ENCODE measurements at regions of chr18 and their contacts with region 1.

Region 1: DNA sequence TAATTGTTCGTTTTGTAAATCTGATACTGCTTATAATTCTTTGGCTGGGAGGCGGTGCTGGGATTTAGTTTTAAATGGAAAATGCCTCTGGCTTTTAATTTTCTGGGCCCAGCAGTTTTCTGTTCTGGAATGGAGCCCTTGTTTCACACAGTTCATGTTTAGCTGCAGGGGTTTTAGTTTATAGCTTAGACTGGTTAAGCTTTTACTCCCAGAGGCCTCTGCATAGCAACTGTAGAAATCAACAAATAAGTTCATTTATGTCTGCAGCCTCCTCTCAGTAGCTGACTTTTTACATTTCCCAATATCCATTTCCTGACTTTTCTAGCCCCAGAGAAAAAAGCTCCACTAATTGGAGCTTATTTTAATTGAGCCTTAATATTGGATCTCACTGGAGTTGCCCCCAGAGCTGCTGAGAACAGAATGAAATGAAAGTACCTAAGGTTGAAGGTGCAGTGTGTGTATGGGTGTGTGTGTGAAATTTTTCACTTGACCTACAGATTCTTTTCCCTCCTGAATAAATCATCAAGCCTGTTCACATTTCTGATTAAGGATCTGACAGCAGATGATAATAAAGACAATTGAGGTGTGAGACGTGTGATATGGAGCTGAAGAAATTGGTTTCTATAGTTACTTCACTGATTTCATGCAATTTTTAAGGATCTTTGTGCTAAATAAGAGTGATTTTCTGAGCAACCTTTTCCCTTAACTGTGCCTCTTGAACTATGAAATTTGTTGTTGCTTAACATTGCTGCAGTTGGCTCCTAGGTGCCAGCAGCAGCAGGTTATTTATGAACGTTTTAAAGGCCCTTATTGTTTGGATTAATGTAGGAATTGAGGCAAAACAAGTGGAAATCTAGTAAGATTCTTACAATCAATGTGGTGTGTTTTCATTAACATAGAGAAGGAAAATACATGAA is 109.6 kb downstream of the TAF4B start:
- DNase-seq: no peak
- ATAC-seq: no peak
- H3K4me3 ChIP-seq: no peak overlapping the region
- H3K4me3 Mint-ChIP-seq: no peak overlapping the region
- H3K27ac ChIP-seq: no peak overlapping the region
- H3K27ac Mint-ChIP-seq: no peak overlapping the region
- H3K4me1 ChIP-seq: no peaks in the 10 kb centered on the region
- H3K4me1 Mint-ChIP-seq: no peaks in the 10 kb centered on the region
- H3K27me3 ChIP-seq: no peaks in the 10 kb centered on the region
- H3K27me3 Mint-ChIP-seq: no peaks in the 10 kb centered on the region
- CTCF ChIP-seq: no peak

Region 2: DNA sequence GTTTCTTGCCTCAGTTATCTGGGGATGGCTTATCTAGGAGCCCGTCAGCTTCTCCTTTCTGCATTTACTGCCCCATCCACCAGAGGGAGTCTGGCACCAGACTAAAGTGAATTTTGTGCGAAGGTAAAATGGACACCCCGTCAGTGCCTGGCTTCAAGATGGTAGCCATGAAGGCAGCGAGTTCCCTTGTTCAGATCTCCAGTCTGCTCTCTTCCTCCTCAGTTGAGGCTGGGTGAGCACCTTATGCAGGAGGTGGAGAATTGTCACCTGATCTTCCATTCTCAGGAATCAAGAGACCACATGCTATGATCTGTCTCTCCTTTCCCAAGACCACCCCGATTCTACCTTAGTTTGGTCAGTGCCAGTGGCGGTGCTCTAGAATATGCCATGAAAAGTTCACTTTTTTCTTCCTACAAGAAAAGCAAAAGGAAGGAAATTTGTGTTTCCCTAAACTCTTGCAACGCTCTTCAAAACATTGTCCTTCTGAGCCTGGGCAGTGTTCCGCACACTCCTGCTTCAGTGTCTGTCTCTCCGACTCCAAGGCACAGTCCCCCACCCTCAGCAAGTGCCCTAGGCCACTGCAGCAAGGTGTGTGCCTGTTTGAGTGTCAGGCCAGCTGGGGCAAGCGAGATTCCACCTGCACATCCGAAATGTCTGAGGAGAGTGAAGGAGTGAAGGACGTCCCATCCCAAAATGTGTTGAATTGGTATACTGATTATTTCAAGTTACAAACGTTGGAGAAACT is 414.0 kb before region 1 on chr18:
- CTCF ChIA-PET with region 1: interaction called, 4 read pairs
- POLR2A ChIA-PET with region 1: no interaction called
- intact Hi-C with region 1: loop called (anchors 1 kb)
- DNase-seq: peak; percentile 49
- ATAC-seq: peak; percentile 36
- H3K4me3 ChIP-seq: no peak overlapping the region
- H3K4me3 Mint-ChIP-seq: no peak overlapping the region
- H3K27ac ChIP-seq: no peak overlapping the region
- H3K27ac Mint-ChIP-seq: no peak overlapping the region
- H3K4me1 ChIP-seq: peaks cover 0 to 3% of the 10 kb centered on the region in 2 donors
- H3K4me1 Mint-ChIP-seq: no peaks in the 10 kb centered on the region
- H3K27me3 ChIP-seq: peaks cover 0 to 3% (median 0%) of the 10 kb centered on the region in 4 experiments
- H3K27me3 Mint-ChIP-seq: peaks cover 8% of the 10 kb centered on the region
- CTCF ChIP-seq: peak; percentile 70

Region 3: GRCh38 chr18:26317398-26317797 is 18.4 kb before region 1 on chr18:
- CTCF ChIA-PET with region 1: no interaction called
- POLR2A ChIA-PET with region 1: no interaction called
- intact Hi-C with region 1: no loop called
- DNase-seq: no peak
- ATAC-seq: no peak
- H3K4me3 ChIP-seq: no peak overlapping the region
- H3K4me3 Mint-ChIP-seq: no peak overlapping the region
- H3K27ac ChIP-seq: no peak overlapping the region
- H3K27ac Mint-ChIP-seq: no peak overlapping the region
- H3K4me1 ChIP-seq: no peaks in the 10 kb centered on the region
- H3K4me1 Mint-ChIP-seq: no peaks in the 10 kb centered on the region
- H3K27me3 ChIP-seq: no peaks in the 10 kb centered on the region
- H3K27me3 Mint-ChIP-seq: no peaks in the 10 kb centered on the region
- CTCF ChIP-seq: no peak

Measured in B cell (primary cell).